Esophagus squamous epithelium (tissue), 5 donors: ENCODE measurements at regions of chr19 and their contacts with region 1.

Region 1: GRCh38 chr19:7550987-7551761 is 15.7 kb downstream of the PNPLA6 start:
- DNase-seq: no peak
- H3K4me3 ChIP-seq: peak overlapping the region in 3 of 4 donors; percentile 16 to 47 (median 33)
- H3K27ac ChIP-seq: peak overlapping the region in 2 of 4 donors; percentile 48 to 61
- H3K4me1 ChIP-seq: peaks cover 0 to 13% (median 0%) of the 10 kb centered on the region in 3 donors
- H3K27me3 ChIP-seq: no peaks in the 10 kb centered on the region
- CTCF ChIP-seq: no peak
- POLR2A ChIP-seq: no peak

Region 2: DNA sequence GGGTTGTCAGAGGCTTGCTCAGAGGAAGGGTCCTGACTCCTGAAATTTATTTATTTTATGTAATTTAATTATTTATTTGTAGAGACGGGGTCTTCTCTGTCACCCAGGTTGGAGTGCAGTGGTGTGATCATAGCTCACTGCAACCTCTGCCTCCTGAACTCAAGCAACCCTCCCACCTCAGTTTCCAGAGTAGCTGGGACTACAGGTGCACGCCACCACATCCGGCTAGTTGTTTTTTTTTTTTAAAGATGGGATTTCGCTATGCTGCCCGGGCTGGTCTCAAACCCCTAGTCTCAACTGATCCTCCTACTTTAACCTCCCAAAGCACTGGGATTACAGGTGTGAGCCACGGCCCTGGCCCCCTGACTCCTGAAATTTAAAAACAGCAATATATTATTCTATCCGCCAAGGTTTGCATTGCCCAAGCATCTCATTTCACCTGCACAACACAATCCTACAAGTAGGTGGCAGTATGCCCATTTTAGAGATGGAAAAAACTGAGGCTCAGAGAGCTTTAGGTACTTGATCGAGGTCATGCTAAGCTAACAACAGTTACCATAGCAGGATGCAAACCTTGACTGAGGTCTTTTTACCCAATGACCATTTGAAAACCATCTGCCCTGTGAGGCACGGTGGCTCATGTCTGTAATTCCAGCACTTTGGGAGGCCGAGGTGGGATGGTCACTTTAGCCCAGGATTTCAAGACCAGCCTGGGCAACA is 184.3 kb before region 1 on chr19:
- intact Hi-C with region 1: loop called (anchors 10 kb)
- DNase-seq: no peak
- H3K4me3 ChIP-seq: no peak overlapping the region
- H3K27ac ChIP-seq: no peak overlapping the region
- H3K4me1 ChIP-seq: peaks cover 0 to 10% (median 4%) of the 10 kb centered on the region in 3 donors
- H3K27me3 ChIP-seq: no peaks in the 10 kb centered on the region
- CTCF ChIP-seq: peak in 4 of 6 experiments; percentile 28 to 61 (median 40)
- POLR2A ChIP-seq: no peak

Region 3: DNA sequence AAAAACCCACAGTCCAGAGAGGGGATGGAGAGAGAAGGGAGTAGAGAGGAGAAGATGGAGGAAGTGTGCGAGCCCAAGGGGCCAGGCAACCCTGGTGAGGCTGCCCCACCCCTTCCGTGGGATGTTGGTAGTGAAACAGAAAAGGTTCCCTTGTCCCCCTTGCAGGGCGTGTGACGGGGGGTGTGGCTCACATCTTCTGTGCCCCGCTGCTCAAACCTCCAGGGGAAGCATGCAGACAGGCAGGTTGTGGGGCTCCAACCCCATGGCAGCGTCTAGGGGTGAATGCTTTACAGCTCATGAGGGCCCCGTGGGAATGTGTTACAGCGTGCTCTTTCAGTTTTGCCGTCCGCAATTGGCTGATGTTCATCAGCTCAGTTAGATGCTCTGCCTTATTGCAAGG is 264.2 kb after region 1 on chr19:
- intact Hi-C with region 1: no loop called
- DNase-seq: no peak
- H3K4me3 ChIP-seq: no peak overlapping the region
- H3K27ac ChIP-seq: no peak overlapping the region
- H3K4me1 ChIP-seq: no peaks in the 10 kb centered on the region
- H3K27me3 ChIP-seq: peaks cover 0 to 68% (median 0%) of the 10 kb centered on the region in 4 donors
- CTCF ChIP-seq: no peak
- POLR2A ChIP-seq: no peak